K562 (cell line): ENCODE measurements at regions of chr12 and their contacts with region 1.

Region 1: GRCh38 chr12:23887055-23887835 is 62.2 kb downstream of the SOX5 start:
- DNase-seq: peak; percentile 15 to 78 (median 37)
- ATAC-seq: peak; percentile 87
- H3K4me3 ChIP-seq: no peak overlapping the region
- H3K27ac ChIP-seq: peak overlapping the region; percentile 55
- H3K4me1 ChIP-seq: peaks cover 0 to 28% of the 10 kb centered on the region in 2 experiments; a peak in 3 of 5 replicates
- H3K27me3 ChIP-seq: no peaks in the 10 kb centered on the region
- CTCF ChIP-seq: no peak
- EP300 ChIP-seq: peak; percentile 91
- POLR2A ChIP-seq: no peak
- RAD21 ChIP-seq: 0 out of 4 replicates have a peak, but pooled peaks of 1 of the 2 experiments have one; percentile 9

Region 2: DNA sequence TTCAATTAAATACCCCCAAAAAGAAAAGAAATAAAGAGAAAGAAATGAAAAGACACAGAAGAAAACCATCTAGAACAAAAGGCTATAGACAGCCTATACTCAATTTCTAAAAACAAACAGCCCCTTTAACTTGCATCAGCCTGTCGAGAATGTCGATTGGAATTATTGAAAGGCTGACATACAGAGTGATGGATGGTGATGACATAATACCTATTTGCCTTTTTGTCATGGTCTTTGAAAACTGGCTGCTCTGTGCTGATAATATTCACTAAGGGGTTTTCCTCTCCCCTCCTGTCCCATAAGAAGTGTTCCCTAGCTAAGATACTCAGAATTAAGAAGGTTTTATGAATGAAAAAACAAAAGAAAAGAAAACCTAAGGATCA is 331.4 kb before region 1 on chr12:
- CTCF ChIA-PET with region 1: no interaction called
- POLR2A ChIA-PET with region 1: no interaction called
- in situ Hi-C with region 1: no loop called
- intact Hi-C with region 1: loop called (anchors 2 kb)
- DNase-seq: peak; percentile 29 to 80 (median 50)
- ATAC-seq: peak; percentile 72
- H3K4me3 ChIP-seq: peak overlapping the region; percentile 31
- H3K27ac ChIP-seq: peak overlapping the region; percentile 85
- H3K4me1 ChIP-seq: peaks cover 3 to 48% of the 10 kb centered on the region in 2 experiments; a peak in 3 of 5 replicates
- H3K27me3 ChIP-seq: no peaks in the 10 kb centered on the region
- CTCF ChIP-seq: no peak
- EP300 ChIP-seq: peak; percentile 83
- POLR2A ChIP-seq: no peak; the same call in 1 of the 2 replicates
- RAD21 ChIP-seq: no peak